CD8-positive, alpha-beta T cell (primary cell): ENCODE measurements at regions of chr2 and their contacts with region 1.

Region 1: GRCh38 chr2:60707750-60708371 is 48.2 kb upstream of the PAPOLG start:
- DNase-seq: peak in 2 of 9 experiments; percentile 47 to 64
- ATAC-seq: peak; percentile 58
- H3K4me3 ChIP-seq: no peak overlapping the region
- H3K4me3 Mint-ChIP-seq: no peak overlapping the region
- H3K27ac ChIP-seq: no peak overlapping the region
- H3K27ac Mint-ChIP-seq: no peak overlapping the region
- H3K4me1 ChIP-seq: no peaks in the 10 kb centered on the region
- H3K4me1 Mint-ChIP-seq: no peaks in the 10 kb centered on the region
- H3K27me3 ChIP-seq: no peaks in the 10 kb centered on the region
- H3K27me3 Mint-ChIP-seq: peaks cover 4% of the 10 kb centered on the region
- CTCF ChIP-seq: peak; percentile 83

Region 2: GRCh38 chr2:60693551-60693950 is 14.3 kb before region 1 on chr2:
- CTCF ChIA-PET with region 1: interaction called, 10 read pairs
- POLR2A ChIA-PET with region 1: no interaction called
- intact Hi-C with region 1: no loop called
- DNase-seq: no peak
- ATAC-seq: no peak
- H3K4me3 ChIP-seq: no peak overlapping the region
- H3K4me3 Mint-ChIP-seq: no peak overlapping the region
- H3K27ac ChIP-seq: no peak overlapping the region
- H3K27ac Mint-ChIP-seq: no peak overlapping the region
- H3K4me1 ChIP-seq: no peaks in the 10 kb centered on the region
- H3K4me1 Mint-ChIP-seq: no peaks in the 10 kb centered on the region
- H3K27me3 ChIP-seq: no peaks in the 10 kb centered on the region
- H3K27me3 Mint-ChIP-seq: peaks cover 3% of the 10 kb centered on the region
- CTCF ChIP-seq: no peak

Region 3: GRCh38 chr2:60794277-60794863 is 86.5 kb after region 1 on chr2:
- CTCF ChIA-PET with region 1: no interaction called
- POLR2A ChIA-PET with region 1: no interaction called
- intact Hi-C with region 1: loop called in 1 of 2 experiments (anchors 5 kb)
- DNase-seq: peak in 2 of 9 experiments; percentile 49 to 61
- ATAC-seq: peak; percentile 59
- H3K4me3 ChIP-seq: no peak overlapping the region
- H3K4me3 Mint-ChIP-seq: no peak overlapping the region
- H3K27ac ChIP-seq: no peak overlapping the region
- H3K27ac Mint-ChIP-seq: no peak overlapping the region
- H3K4me1 ChIP-seq: no peaks in the 10 kb centered on the region
- H3K4me1 Mint-ChIP-seq: peaks cover 11% of the 10 kb centered on the region
- H3K27me3 ChIP-seq: no peaks in the 10 kb centered on the region
- H3K27me3 Mint-ChIP-seq: no peaks in the 10 kb centered on the region
- CTCF ChIP-seq: peak; percentile 85

Region 4: GRCh38 chr2:60992985-60993392 is 285.1 kb after region 1 on chr2:
- CTCF ChIA-PET with region 1: interaction called, 131 read pairs
- POLR2A ChIA-PET with region 1: no interaction called
- intact Hi-C with region 1: no loop called
- DNase-seq: peak in 5 of 9 experiments; percentile 9 to 82 (median 21)
- ATAC-seq: peak; percentile 95
- H3K4me3 ChIP-seq: peak overlapping the region in 1 of 2 experiments; percentile 12
- H3K4me3 Mint-ChIP-seq: peak overlapping the region; percentile 64
- H3K27ac ChIP-seq: peak overlapping the region; percentile 44 to 71
- H3K27ac Mint-ChIP-seq: peak overlapping the region; percentile 82
- H3K4me1 ChIP-seq: no peaks in the 10 kb centered on the region
- H3K4me1 Mint-ChIP-seq: peaks cover 7% of the 10 kb centered on the region
- H3K27me3 ChIP-seq: no peaks in the 10 kb centered on the region
- H3K27me3 Mint-ChIP-seq: no peaks in the 10 kb centered on the region
- CTCF ChIP-seq: no peak